IMR-90 (cell line): ENCODE measurements at regions of chr1 and their contacts with region 1.

Region 1: GRCh38 chr1:166902271-166902670 is 26.2 kb upstream of the TADA1 start:
- DNase-seq: peak; percentile 38
- ATAC-seq: peak; percentile 53; the same call in 1 of the 2 replicates
- H3K4me3 ChIP-seq: no peak overlapping the region
- H3K27ac ChIP-seq: no peak overlapping the region
- H3K4me1 ChIP-seq: peaks cover 3% of the 10 kb centered on the region; the same call in 1 of the 2 replicates
- H3K27me3 ChIP-seq: no peaks in the 10 kb centered on the region
- CTCF ChIP-seq: no peak
- POLR2A ChIP-seq: no peak
- RAD21 ChIP-seq: no peak

Region 2: DNA sequence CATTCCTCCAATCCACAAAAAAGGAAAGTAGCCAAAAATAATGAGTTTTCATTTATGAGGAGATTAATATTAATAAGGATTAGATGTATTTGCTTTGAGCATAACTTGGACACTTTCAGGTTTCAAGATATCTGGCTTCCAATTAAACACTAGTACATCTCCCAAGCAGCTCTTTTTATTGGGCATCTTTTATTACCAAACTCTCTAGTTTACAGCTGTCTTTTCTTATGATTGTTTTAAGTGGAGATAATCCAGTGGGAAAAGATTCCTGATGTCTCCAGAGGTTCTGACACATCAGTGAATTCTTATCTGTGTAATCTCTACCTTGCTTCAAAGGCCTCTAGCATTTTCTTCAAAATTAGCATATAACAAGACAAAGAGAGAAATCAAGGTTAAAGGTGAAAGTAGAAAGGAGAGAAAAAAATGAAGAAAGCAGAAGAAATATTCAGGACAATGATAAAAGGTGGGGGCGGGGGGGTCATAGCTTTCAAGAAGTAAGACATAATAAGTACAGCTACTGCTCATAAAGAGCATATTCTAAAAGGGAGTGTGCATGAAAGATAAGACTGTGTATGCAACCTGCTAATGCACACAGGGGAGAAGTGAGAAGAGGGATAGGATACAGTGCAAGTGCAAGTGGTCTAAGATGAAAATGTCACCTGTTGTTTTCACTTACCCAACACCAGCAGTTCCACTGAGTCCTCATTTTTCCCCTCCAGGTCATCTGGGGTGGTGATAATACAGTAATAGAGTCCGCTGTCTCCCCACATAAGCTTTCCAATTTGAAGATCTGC is 54.0 kb after region 1 on chr1:
- CTCF ChIA-PET with region 1: no interaction called
- POLR2A ChIA-PET with region 1: no interaction called
- dilution Hi-C with region 1: no loop called
- in situ Hi-C with region 1: no loop called
- intact Hi-C with region 1: loop called (anchors 2 kb)
- DNase-seq: no peak
- ATAC-seq: no peak
- H3K4me3 ChIP-seq: no peak overlapping the region
- H3K27ac ChIP-seq: no peak overlapping the region
- H3K4me1 ChIP-seq: no peaks in the 10 kb centered on the region
- H3K27me3 ChIP-seq: peaks cover 6% of the 10 kb centered on the region
- CTCF ChIP-seq: no peak
- POLR2A ChIP-seq: no peak
- RAD21 ChIP-seq: no peak

Region 3: DNA sequence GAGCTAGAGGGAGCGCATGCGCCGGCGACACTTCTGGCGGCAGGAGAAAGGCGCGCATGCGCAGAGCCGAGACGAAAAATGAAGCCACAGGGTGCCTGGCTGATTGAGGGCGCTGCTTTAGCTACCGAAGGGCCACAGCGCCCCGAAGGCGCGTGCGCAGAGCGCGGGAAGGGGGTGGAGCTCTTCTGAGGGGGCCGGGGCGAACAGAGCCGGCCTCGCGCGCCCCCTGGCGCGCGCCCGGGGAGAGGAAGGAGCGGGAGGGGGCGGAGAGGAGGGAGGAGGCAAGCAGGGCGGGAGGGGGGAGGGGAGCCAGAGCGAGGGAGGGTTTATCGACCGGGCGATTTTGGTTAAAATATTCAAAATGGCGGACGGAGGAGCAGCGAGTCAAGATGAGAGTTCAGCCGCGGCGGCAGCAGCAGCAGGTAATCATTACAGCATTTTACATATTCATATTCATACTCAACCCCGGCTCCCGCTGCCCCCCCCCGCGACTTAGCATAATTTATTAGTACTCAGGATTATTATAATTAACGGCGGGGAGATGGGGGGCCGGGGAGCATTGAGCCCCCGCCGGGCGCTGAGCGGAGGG is 318.4 kb after region 1 on chr1 and contains the start of gene POU2F1:
- CTCF ChIA-PET with region 1: no interaction called
- POLR2A ChIA-PET with region 1: no interaction called
- dilution Hi-C with region 1: no loop called
- in situ Hi-C with region 1: no loop called
- intact Hi-C with region 1: no loop called
- DNase-seq: peak; percentile 97
- ATAC-seq: peak; percentile 92
- H3K4me3 ChIP-seq: peak within 1 kb of the TSS; percentile 66
- H3K27ac ChIP-seq: peak within 1 kb of the TSS; percentile 72
- H3K4me1 ChIP-seq: no peaks in the 10 kb centered on the region
- H3K27me3 ChIP-seq: peaks cover 2% of the 10 kb centered on the region; the same call in 1 of the 2 replicates
- CTCF ChIP-seq: peak; percentile 89
- POLR2A ChIP-seq: 0 out of 2 replicates have a peak, but pooled peaks have one; percentile 49
- RAD21 ChIP-seq: peak; percentile 36
- total RNA-seq, gene POU2F1: 3.4 and 4.4 TPM in 2 replicates